PC-3 (cell line): ENCODE measurements at regions of chr4 and their contacts with region 1.

Region 1: DNA sequence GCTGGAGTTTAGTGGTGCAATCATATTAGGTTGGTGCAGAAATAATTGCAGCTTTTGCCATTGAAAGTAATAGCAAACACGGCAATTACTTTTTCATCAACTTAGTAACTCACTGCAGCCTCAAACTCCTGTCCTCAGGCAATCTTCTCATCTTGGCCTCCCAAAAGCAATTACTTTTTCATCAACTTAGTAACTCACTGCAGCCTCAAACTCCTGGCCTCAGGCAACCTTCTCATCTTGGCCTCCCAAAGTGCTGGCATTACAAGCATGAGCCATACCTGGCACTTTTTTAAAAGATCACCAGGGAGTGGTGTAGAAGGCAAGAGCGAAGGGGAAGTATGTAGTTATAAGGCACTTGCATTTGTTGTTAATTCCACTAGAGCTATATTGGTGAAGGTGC is 491.1 kb upstream of the ADGRL3 start:
- DNase-seq: no peak
- ATAC-seq: no peak
- H3K4me3 ChIP-seq: no peak overlapping the region
- H3K27ac ChIP-seq: no peak overlapping the region
- H3K4me1 ChIP-seq: no peaks in the 10 kb centered on the region
- H3K27me3 ChIP-seq: no peaks in the 10 kb centered on the region
- CTCF ChIP-seq: no peak

Region 2: GRCh38 chr4:59238212-59238611 is 1470.8 kb before region 1 on chr4:
- CTCF ChIA-PET with region 1: interaction called, 15 read pairs
- POLR2A ChIA-PET with region 1: no interaction called
- intact Hi-C with region 1: no loop called
- DNase-seq: no peak
- ATAC-seq: no peak
- H3K4me3 ChIP-seq: no peak overlapping the region
- H3K27ac ChIP-seq: no peak overlapping the region
- H3K4me1 ChIP-seq: no peaks in the 10 kb centered on the region
- H3K27me3 ChIP-seq: no peaks in the 10 kb centered on the region
- CTCF ChIP-seq: no peak